ENCODE measurements at regions of chr12 and their contacts with region 1.

Region 1: GRCh38 chr12:109670731-109671130 is 42.9 kb upstream of the FAM222A start:
- DNase-seq: no peak
- H3K4me3 ChIP-seq: no peak overlapping the region
- H3K27ac ChIP-seq: no peak overlapping the region
- H3K4me1 ChIP-seq: no peaks in the 10 kb centered on the region
- H3K27me3 ChIP-seq: peaks cover 3% of the 10 kb centered on the region
- CTCF ChIP-seq: no peak
- EP300 ChIP-seq: no peak
- POLR2A ChIP-seq: no peak

Region 2: GRCh38 chr12:109139791-109140190 is 530.9 kb before region 1 on chr12:
- in situ Hi-C with region 1: no loop called
- intact Hi-C with region 1: loop called (anchors 5 kb)
- DNase-seq: no peak
- H3K4me3 ChIP-seq: no peak overlapping the region
- H3K27ac ChIP-seq: no peak overlapping the region
- H3K4me1 ChIP-seq: peaks cover 0 to 25% (median 6%) of the 10 kb centered on the region in 4 donors
- H3K27me3 ChIP-seq: no peaks in the 10 kb centered on the region
- CTCF ChIP-seq: no peak
- EP300 ChIP-seq: no peak
- POLR2A ChIP-seq: no peak

Region 3: DNA sequence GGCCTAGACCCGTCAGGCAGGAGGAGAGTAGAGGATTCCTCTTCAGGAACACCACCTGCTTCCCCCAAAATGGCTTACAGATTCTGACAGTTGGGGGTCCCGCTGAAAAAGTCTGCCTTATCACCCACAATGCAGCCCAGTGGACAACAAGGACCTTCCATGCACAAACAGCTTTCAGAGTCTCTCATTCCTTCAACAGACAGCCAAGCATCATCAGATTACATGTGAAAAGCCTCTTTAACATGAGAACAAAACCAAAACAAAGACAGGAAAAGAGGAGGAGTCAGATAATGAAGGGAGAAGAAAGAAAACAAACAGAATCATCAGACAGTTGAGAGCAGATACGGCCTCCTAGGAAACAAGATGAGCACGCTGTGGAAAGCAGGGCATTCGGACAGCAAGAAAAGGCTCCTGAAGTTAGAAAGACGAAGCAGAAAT is 211.9 kb before region 1 on chr12:
- in situ Hi-C with region 1: no loop called
- intact Hi-C with region 1: no loop called
- DNase-seq: no peak
- H3K4me3 ChIP-seq: no peak overlapping the region
- H3K27ac ChIP-seq: peak overlapping the region; percentile 91 to 97 (median 94)
- H3K4me1 ChIP-seq: peaks cover 44 to 64% (median 54%) of the 10 kb centered on the region in 4 donors
- H3K27me3 ChIP-seq: no peaks in the 10 kb centered on the region
- CTCF ChIP-seq: no peak
- EP300 ChIP-seq: no peak
- POLR2A ChIP-seq: no peak